ENCODE measurements at regions of chr18 and their contacts with region 1.

Region 1: DNA sequence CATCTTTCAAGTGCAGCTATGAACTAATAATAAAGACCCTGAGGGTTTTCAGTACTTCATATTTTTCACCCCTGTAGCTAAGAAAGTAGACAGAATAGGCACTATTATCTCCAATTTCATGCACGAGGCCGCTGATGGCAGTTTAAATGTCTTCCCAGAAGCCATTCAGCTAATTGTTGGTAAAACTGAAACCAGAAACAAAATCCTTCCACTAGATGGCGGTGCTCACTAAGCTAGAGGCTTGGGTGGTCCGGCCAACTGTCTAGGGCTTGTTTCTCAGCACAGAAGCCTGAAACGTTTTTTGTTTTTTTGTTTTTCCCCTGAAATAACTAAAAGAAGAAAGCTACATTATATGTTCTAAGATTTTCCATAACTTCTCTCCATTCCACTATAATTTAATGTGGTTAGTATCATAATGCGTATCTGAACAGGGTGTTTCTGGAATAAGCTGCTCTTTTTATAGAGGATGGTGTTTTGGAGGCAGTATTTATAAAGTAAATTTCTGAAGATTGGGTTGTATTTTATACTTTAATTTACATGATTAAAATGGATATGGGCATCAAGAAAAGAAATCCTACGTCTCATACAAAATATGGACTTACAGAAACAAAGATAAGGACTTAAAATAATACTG is 159.4 kb downstream of the PIK3C3 start:
- DNase-seq: peak; percentile 78
- H3K4me3 Mint-ChIP-seq: no peak overlapping the region
- H3K27ac Mint-ChIP-seq: no peak overlapping the region
- H3K4me1 Mint-ChIP-seq: peaks cover 10% of the 10 kb centered on the region
- H3K27me3 Mint-ChIP-seq: no peaks in the 10 kb centered on the region

Region 2: DNA sequence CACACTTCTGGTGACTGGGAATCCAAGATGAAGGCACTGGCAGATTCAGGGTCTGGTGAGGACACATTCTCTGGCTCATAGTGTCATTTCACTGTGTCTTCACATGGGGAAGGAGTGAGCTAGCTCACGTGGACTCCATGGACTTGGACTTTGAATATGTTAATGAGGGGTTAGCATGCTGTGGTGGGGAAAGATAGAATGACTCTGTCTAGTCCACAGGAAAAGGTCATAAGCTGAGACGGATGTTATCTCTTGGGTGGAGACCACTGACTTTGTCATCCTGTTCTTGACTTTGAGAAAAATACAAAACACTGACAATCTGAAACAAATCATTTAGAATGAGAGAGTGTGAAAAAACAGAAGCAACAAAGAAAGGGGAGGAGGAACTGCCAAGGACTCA is 13.5 kb before region 1 on chr18:
- CTCF ChIA-PET with region 1: interaction called, 19 read pairs
- intact Hi-C with region 1: no loop called
- DNase-seq: no peak
- H3K4me3 Mint-ChIP-seq: no peak overlapping the region
- H3K27ac Mint-ChIP-seq: no peak overlapping the region
- H3K4me1 Mint-ChIP-seq: no peaks in the 10 kb centered on the region
- H3K27me3 Mint-ChIP-seq: no peaks in the 10 kb centered on the region

Region 3: GRCh38 chr18:42274488-42275137 is 160.2 kb after region 1 on chr18:
- CTCF ChIA-PET with region 1: interaction called, 7 read pairs
- intact Hi-C with region 1: loop called (anchors 1 kb)
- DNase-seq: no peak
- H3K4me3 Mint-ChIP-seq: no peak overlapping the region
- H3K27ac Mint-ChIP-seq: no peak overlapping the region
- H3K4me1 Mint-ChIP-seq: no peaks in the 10 kb centered on the region
- H3K27me3 Mint-ChIP-seq: no peaks in the 10 kb centered on the region

Region 4: DNA sequence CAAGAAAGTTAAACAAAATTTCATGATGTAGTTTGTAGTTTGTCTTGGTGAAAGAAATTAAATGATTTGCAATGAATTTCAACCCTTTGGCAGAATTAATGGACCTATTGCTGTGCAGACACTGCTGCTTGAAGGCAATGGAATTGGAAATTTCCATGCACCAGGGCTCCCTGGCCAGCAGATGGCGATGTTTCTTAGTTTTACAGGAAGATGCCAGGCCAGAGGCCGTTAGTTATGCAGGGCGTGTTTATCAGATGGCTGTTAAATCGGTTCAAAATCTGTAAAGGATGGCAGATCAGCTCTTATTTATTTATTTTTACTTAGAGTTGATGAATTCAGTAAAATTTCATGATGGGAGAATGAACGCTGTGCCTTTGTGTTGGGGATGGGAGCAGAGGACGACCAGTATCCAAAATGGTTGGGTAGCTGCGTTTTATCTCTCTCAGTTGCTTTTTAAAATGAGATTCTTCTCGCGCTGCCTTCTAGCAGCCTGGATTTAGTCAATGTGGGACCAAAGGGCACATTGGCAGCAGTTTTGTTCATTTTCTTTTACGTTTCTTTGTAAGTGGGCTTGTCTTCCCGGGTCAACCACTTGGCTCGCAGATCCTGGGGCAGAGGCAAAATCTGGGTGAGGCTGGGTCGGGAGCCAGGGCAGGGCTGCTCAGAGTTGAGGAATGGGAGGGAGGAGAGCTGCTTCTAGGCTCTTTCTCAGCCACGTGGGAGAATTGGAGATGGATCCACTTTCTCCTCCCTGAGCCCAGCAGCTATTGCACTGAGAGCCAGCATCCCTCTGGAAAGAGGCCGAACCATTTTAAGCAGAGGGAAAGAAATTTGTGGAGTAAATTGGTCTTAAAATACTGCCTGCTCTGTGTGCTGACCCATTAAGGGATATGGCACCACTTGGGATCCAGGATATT is 184.6 kb after region 1 on chr18:
- CTCF ChIA-PET with region 1: interaction called, 11 read pairs
- intact Hi-C with region 1: loop called (anchors 1 kb)
- DNase-seq: peak; percentile 79
- H3K4me3 Mint-ChIP-seq: no peak overlapping the region
- H3K27ac Mint-ChIP-seq: no peak overlapping the region
- H3K4me1 Mint-ChIP-seq: no peaks in the 10 kb centered on the region
- H3K27me3 Mint-ChIP-seq: peaks cover 7% of the 10 kb centered on the region

Region 5: GRCh38 chr18:43271593-43272432 is 1157.4 kb after region 1 on chr18:
- CTCF ChIA-PET with region 1: interaction called, 14 read pairs
- intact Hi-C with region 1: loop called (anchors 1 kb)
- DNase-seq: peak; percentile 36
- H3K4me3 Mint-ChIP-seq: no peak overlapping the region
- H3K27ac Mint-ChIP-seq: no peak overlapping the region
- H3K4me1 Mint-ChIP-seq: no peaks in the 10 kb centered on the region
- H3K27me3 Mint-ChIP-seq: peaks cover 3% of the 10 kb centered on the region

Region 6: DNA sequence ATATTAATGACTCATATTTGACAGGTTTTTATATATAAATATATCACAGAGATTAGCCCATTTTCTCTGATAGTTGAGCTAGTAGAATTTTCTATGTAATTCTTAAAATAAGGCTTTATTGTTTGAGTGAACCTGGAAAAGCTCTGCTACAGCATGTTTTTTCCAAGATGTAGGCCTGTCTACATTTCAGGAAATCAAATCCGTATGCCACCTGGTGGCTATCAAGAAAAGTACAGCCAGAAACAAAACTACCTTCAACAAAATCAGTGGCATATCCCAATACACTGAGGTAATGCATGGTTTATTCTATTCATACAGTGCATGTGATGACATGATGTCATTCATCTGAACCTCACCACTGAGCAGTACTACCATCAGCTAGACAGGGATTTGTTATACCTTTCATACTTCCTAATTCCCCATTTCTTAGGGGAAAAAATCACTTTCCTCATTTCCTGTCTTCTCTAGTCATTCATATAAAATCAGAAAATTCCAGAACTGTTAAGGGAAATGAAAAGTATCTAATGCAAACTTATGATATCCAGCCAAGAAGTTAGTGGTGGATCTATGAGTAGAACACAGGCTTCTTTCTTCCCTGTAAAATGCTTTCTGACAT is 1473.2 kb after region 1 on chr18:
- CTCF ChIA-PET with region 1: interaction called, 4 read pairs
- intact Hi-C with region 1: loop called (anchors 2 kb)
- DNase-seq: no peak
- H3K4me3 Mint-ChIP-seq: no peak overlapping the region
- H3K27ac Mint-ChIP-seq: no peak overlapping the region
- H3K4me1 Mint-ChIP-seq: no peaks in the 10 kb centered on the region
- H3K27me3 Mint-ChIP-seq: no peaks in the 10 kb centered on the region